Mammary epithelial cell (primary cell): ENCODE measurements at regions of chr5 and their contacts with region 1.

Region 1: GRCh38 chr5:68287976-68288706 is 72.6 kb downstream of the PIK3R1 start:
- DNase-seq: peak; percentile 80
- H3K4me3 ChIP-seq: peak overlapping the region; percentile 29 to 55 (median 39)
- H3K27ac ChIP-seq: peak overlapping the region; percentile 65
- H3K4me1 ChIP-seq: peaks cover 50% of the 10 kb centered on the region
- H3K27me3 ChIP-seq: no peaks in the 10 kb centered on the region
- CTCF ChIP-seq: no peak

Region 2: GRCh38 chr5:68392617-68393016 is 104.5 kb after region 1 on chr5:
- CTCF ChIA-PET with region 1: no interaction called
- dilution Hi-C with region 1: no loop called
- in situ Hi-C with region 1: no loop called
- intact Hi-C with region 1: no loop called
- DNase-seq: no peak
- H3K4me3 ChIP-seq: no peak overlapping the region
- H3K27ac ChIP-seq: no peak overlapping the region
- H3K4me1 ChIP-seq: peaks cover 6% of the 10 kb centered on the region
- H3K27me3 ChIP-seq: no peaks in the 10 kb centered on the region
- CTCF ChIP-seq: no peak

Region 3: DNA sequence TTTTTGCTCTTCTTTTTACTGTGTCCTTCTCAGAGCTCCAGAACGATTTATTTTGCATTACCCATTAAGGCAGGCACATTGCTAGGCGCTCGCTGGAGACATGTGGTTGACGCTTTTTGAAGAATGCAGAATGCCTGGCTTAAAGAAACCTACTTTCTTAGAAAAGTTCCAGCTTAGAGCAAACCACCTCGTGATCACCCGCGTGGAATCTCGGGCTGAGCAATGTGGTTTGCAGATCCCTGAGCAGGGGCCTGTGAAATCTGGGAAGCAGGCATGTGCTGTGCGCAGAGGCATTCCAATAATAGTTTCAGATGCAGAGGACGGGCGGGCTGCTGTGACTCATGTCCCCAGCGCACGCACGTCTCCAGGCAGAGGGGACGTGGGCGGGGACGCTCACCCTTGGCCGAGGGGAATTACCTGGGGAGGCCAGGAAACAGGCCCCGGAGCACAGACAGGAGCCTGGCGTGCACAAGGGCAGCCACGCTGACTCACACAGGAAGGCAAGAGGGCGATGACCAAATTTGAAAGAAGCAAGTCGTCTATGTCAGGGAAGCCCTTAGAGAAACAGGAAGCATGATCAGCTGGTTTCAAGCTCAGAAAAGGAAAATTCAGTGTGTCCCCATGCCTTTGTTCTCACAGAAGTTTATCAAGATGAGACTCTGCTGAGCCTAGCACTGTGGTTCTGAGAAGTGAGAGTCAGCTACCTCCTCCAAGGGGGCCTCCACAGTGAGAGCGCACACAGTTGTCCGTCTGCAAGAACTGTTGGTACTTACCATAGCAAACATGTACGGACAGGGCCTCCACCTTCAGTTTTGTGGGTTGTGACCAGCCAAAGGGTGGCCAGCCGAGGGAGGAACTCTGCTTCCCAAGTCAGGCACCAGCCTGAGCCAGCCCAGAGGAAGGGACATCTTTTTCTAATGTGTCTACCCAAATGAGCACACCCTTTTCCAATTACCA is 146.1 kb after region 1 on chr5:
- CTCF ChIA-PET with region 1: no interaction called
- dilution Hi-C with region 1: no loop called
- in situ Hi-C with region 1: no loop called
- intact Hi-C with region 1: loop called (anchors 1 kb)
- DNase-seq: peak; percentile 100
- H3K4me3 ChIP-seq: no peak overlapping the region
- H3K27ac ChIP-seq: peak overlapping the region; percentile 90
- H3K4me1 ChIP-seq: peaks cover 45% of the 10 kb centered on the region
- H3K27me3 ChIP-seq: no peaks in the 10 kb centered on the region
- CTCF ChIP-seq: no peak

Region 4: GRCh38 chr5:68554571-68555279 is 266.6 kb after region 1 on chr5:
- CTCF ChIA-PET with region 1: no interaction called
- dilution Hi-C with region 1: no loop called
- in situ Hi-C with region 1: no loop called
- intact Hi-C with region 1: loop called (anchors 5 kb)
- DNase-seq: no peak
- H3K4me3 ChIP-seq: no peak overlapping the region
- H3K27ac ChIP-seq: no peak overlapping the region
- H3K4me1 ChIP-seq: peaks cover 11% of the 10 kb centered on the region
- H3K27me3 ChIP-seq: no peaks in the 10 kb centered on the region
- CTCF ChIP-seq: no peak

Region 5: GRCh38 chr5:68745448-68745847 is 457.3 kb after region 1 on chr5:
- CTCF ChIA-PET with region 1: no interaction called
- dilution Hi-C with region 1: no loop called
- in situ Hi-C with region 1: no loop called
- intact Hi-C with region 1: loop called (anchors 1 kb)
- DNase-seq: no peak
- H3K4me3 ChIP-seq: no peak overlapping the region
- H3K27ac ChIP-seq: no peak overlapping the region
- H3K4me1 ChIP-seq: no peaks in the 10 kb centered on the region
- H3K27me3 ChIP-seq: no peaks in the 10 kb centered on the region
- CTCF ChIP-seq: peak; percentile 8 to 28

Region 6: DNA sequence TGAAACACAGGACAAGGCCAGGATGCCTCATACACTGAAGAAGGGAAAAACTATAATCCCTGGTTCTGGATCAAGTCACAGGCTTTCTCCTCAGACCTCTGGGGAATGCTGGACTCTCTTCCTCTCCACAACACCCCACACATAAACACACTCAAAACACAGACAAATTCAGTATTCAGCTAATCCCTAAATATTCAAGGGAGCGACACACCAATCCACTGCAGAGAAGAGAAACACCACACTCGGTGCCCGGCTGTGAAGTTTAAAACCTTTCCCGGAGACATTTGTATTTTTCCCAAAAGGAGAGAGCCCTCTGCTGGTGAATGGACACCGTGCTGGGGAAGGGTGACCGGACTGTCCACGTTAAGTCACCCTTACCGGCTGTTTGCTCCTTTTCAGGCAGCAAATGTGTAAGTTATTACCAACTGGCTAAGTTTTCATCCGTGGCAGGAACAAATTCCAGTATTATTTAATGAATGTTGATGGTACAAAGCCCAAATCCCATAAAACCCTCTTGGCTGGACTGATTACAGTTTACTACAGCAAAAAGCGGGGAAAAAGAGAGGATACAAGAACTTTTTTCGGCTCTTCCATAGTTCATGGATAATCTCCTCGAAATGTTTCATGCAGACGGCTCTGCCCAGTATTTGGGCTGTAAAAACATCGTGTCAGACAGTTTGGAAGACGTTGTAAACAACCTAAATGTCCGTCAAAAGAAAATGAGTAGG is 674.8 kb after region 1 on chr5:
- CTCF ChIA-PET with region 1: no interaction called
- dilution Hi-C with region 1: no loop called
- in situ Hi-C with region 1: loop called (anchors 25 kb)
- intact Hi-C with region 1: loop called (anchors 2 kb)
- DNase-seq: peak; percentile 48
- H3K4me3 ChIP-seq: no peak overlapping the region
- H3K27ac ChIP-seq: no peak overlapping the region
- H3K4me1 ChIP-seq: no peaks in the 10 kb centered on the region
- H3K27me3 ChIP-seq: no peaks in the 10 kb centered on the region
- CTCF ChIP-seq: peak; percentile 75 to 92